Activated T-helper 1 cell treated with anti-CD3 and anti-CD28 coated beads, Interleukin-12 subunit alpha, Interleukin-12 subunit beta, Interleukin-2, Interleukin-4 antibody, amounts not matched to agents 30 ng/mL and 10 ng/mL and 1 ng/mL, durations not matched to agents 14 hours and 24 hours and 36 hours (primary cell): ENCODE measurements at regions of chr11 and their contacts with region 1.

Region 1: DNA sequence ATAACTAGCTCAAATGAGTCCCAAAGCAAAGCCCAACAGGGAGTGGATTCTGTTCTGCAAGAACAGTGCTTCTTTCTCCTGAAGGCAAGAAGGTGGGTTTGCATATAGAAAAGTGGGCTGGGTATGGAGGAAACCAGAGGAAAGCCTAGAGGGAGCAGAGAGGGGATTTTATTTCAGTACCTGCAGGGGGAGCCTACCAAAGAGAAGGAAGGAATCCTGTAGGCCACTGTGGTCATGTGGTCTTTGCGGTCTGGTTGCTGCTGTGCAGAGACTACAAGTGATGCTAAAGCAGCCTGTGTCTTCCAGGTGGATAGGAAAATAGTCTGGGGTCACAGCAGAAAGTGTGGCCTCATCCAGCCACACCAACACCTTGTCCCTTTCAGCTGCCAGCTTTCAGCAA is 33.2 kb upstream of the ZBTB16 start:
- DNase-seq: no peak
- H3K4me3 Mint-ChIP-seq: no peak overlapping the region
- H3K27ac Mint-ChIP-seq: no peak overlapping the region
- H3K4me1 Mint-ChIP-seq: no peaks in the 10 kb centered on the region
- H3K27me3 Mint-ChIP-seq: peaks cover 11% of the 10 kb centered on the region

Region 2: DNA sequence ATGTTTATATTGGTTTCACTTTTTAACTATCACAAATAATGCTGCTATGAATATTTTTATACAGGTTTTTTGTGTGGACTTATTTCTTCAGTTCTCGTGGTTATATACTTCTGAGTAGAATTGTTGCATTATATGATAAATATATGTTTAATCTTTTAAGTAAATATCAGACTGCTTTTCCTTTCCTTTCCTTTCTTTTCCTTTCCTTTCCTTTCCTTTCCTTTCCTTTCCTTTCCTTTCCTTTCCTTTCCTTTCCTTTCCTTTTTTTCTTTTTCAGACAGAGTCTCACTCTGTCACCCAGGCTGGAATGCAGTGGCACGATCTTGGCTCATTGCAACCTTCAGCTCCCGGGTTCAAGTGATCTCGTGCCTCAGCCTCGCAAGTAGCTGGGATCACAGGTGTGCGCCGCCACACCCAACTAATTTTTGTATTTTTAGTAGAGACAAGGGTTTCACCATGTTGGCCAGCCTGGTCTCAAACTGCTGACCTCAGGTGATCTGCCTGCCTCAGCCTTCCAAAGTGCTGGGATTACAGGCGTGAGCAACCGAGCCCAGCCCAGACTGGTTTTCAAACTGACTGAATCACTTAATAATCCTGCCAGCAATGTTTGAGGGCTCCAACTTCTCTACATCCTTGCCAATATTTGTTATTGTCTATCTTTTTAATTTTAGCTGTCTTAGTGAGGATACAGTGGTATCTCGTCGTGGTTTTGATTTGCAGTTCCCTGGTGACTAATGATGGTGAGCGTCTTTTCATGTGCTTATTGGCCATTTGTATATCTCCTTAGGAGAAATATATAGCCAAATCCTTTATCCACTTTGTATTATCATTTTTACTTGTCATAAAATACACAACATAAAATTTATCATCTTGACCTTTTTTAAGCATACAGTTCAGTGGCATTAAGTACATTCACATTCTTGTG is 99.8 kb before region 1 on chr11:
- intact Hi-C with region 1: no loop called
- DNase-seq: no peak
- H3K4me3 Mint-ChIP-seq: no peak overlapping the region
- H3K27ac Mint-ChIP-seq: no peak overlapping the region
- H3K4me1 Mint-ChIP-seq: no peaks in the 10 kb centered on the region
- H3K27me3 Mint-ChIP-seq: peaks cover 10% of the 10 kb centered on the region

Region 3: GRCh38 chr11:113960702-113961330 is 65.5 kb before region 1 on chr11:
- intact Hi-C with region 1: loop called (anchors 10 kb)
- DNase-seq: no peak
- H3K4me3 Mint-ChIP-seq: no peak overlapping the region
- H3K27ac Mint-ChIP-seq: no peak overlapping the region
- H3K4me1 Mint-ChIP-seq: no peaks in the 10 kb centered on the region
- H3K27me3 Mint-ChIP-seq: peaks cover 3% of the 10 kb centered on the region

Region 4: GRCh38 chr11:114015119-114015518 is 11.2 kb before region 1 on chr11:
- intact Hi-C with region 1: no loop called
- DNase-seq: no peak
- H3K4me3 Mint-ChIP-seq: no peak overlapping the region
- H3K27ac Mint-ChIP-seq: no peak overlapping the region
- H3K4me1 Mint-ChIP-seq: no peaks in the 10 kb centered on the region
- H3K27me3 Mint-ChIP-seq: peaks cover 12% of the 10 kb centered on the region